ENCODE measurements at regions of chr10 and their contacts with region 1.

Region 1: GRCh38 chr10:72223743-72224101 is 7.6 kb upstream of the ASCC1 start:
- DNase-seq: no peak
- ATAC-seq: peak; percentile 47
- H3K4me3 Mint-ChIP-seq: peak overlapping the region; percentile 59
- H3K27ac Mint-ChIP-seq: peak overlapping the region; percentile 84
- H3K4me1 Mint-ChIP-seq: peaks cover 67% of the 10 kb centered on the region
- H3K27me3 Mint-ChIP-seq: no peaks in the 10 kb centered on the region
- CTCF ChIP-seq: no peak

Region 2: GRCh38 chr10:71569775-71570588 is 653.7 kb before region 1 on chr10:
- CTCF ChIA-PET with region 1: no interaction called
- POLR2A ChIA-PET with region 1: no interaction called
- intact Hi-C with region 1: no loop called
- DNase-seq: peak; percentile 62
- ATAC-seq: peak; percentile 67
- H3K4me3 Mint-ChIP-seq: no peak overlapping the region
- H3K27ac Mint-ChIP-seq: no peak overlapping the region
- H3K4me1 Mint-ChIP-seq: no peaks in the 10 kb centered on the region
- H3K27me3 Mint-ChIP-seq: peaks cover 5% of the 10 kb centered on the region
- CTCF ChIP-seq: no peak

Region 3: DNA sequence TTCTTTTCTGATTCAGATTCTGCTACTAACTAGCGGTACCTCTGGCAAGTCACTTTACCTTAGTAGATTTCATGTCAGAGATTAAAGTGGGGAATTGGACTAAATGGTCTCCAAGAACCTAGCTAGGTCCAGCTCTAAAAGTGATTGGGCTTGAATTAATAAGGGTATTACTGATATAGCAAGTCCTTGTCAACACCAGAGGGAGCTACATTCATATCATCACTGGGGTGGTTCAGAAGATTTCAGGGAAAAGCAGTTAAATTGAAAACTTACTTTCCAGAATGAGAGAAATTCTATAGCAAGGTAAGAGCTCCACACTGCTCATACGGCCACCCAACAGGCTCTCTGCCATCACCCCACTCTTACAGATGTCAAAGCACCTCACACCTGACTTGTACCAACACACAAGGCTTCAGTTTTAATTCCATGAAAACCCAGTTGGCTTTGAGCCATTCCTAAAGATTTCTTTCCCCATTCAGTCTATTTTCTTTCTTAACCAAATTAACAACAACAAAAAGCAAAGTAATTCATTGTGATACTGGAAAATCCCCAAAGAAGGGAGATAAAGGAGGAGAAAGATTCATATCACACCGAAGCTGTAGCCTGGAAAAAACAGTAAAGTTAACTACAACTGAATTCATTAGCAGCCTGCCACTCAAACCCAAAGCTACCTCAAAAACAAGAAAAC is 97.4 kb before region 1 on chr10:
- CTCF ChIA-PET with region 1: interaction called, 25 read pairs
- POLR2A ChIA-PET with region 1: interaction called, 6 read pairs
- intact Hi-C with region 1: loop called (anchors 1 kb)
- DNase-seq: no peak
- ATAC-seq: no peak
- H3K4me3 Mint-ChIP-seq: no peak overlapping the region
- H3K27ac Mint-ChIP-seq: peak overlapping the region; percentile 42
- H3K4me1 Mint-ChIP-seq: peaks cover 2% of the 10 kb centered on the region
- H3K27me3 Mint-ChIP-seq: no peaks in the 10 kb centered on the region
- CTCF ChIP-seq: no peak

Region 4: GRCh38 chr10:72260588-72261322 is 37.0 kb after region 1 on chr10:
- CTCF ChIA-PET with region 1: interaction called, 3 read pairs
- POLR2A ChIA-PET with region 1: interaction called, 40 read pairs
- intact Hi-C with region 1: no loop called
- DNase-seq: peak; percentile 70
- ATAC-seq: peak; percentile 71
- H3K4me3 Mint-ChIP-seq: peak overlapping the region; percentile 91
- H3K27ac Mint-ChIP-seq: peak overlapping the region; percentile 96
- H3K4me1 Mint-ChIP-seq: peaks cover 58% of the 10 kb centered on the region
- H3K27me3 Mint-ChIP-seq: no peaks in the 10 kb centered on the region
- CTCF ChIP-seq: no peak

Region 5: DNA sequence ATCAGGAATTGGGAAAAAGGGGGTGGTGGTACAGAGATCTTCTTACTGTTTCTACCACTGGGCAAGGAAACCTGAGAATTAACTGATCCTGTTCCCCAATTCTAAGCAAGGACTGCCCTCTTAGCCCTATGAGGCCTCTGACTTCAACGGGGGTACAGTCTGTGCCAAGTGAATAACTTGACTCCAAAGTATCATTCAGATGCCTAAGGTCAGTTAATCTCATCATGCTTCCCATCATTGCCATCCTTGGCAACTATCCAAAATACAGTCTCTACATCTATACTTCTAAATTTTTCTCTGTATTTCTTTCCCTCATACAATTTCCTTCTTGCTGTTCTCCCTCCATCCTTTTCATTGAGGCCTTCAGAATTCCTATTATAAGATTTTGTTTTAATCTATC is 1261.6 kb after region 1 on chr10:
- CTCF ChIA-PET with region 1: no interaction called
- POLR2A ChIA-PET with region 1: no interaction called
- intact Hi-C with region 1: no loop called
- DNase-seq: no peak
- ATAC-seq: no peak
- H3K4me3 Mint-ChIP-seq: no peak overlapping the region
- H3K27ac Mint-ChIP-seq: no peak overlapping the region
- H3K4me1 Mint-ChIP-seq: peaks cover 16% of the 10 kb centered on the region
- H3K27me3 Mint-ChIP-seq: no peaks in the 10 kb centered on the region
- CTCF ChIP-seq: no peak

Measured in activated B cell treated with CpG ODN at 0.5 μM for 24 hours (primary cell).